ENCODE measurements at regions of chr5 and their contacts with region 1.

Region 1: DNA sequence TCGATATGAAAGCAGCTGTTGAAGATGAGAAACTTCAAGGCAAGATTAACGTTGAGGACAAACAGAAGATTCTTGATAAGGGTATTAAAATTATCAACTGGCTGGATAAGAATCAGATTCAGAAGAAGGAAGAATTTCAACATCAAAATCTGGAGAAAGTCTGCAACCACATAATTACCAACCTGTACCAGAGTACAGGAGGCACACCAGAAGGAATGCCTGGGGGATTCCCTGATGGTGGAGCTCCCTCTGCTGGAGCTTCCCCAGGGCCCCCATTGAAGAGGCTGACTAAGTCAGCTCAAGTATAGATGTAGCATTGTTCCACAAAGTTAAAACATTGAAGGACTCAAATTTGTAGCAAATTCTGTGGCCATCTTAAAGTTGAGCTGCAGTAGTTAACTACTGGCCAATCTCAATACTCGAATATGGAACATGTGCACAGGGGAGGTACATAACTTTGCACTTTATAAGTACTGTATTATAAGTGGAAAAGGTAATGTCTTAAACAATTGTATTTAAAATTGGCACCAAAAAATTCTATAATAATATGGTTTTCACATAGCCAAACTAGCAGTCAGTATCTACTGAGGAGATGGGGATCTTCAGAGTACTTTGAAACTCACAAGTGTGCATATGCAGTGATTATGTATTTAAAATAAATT is 237.5 kb downstream of the CHSY3 start:
- DNase-seq: peak; percentile 17 to 70
- H3K4me3 ChIP-seq: no peak overlapping the region
- H3K27ac ChIP-seq: no peak overlapping the region
- H3K4me1 ChIP-seq: no peaks in the 10 kb centered on the region
- H3K27me3 ChIP-seq: no peaks in the 10 kb centered on the region
- CTCF ChIP-seq: peak; percentile 70 to 83 (median 81)
- EP300 ChIP-seq: no peak
- POLR2A ChIP-seq: no peak
- RAD21 ChIP-seq: peak; percentile 89 to 90

Region 2: DNA sequence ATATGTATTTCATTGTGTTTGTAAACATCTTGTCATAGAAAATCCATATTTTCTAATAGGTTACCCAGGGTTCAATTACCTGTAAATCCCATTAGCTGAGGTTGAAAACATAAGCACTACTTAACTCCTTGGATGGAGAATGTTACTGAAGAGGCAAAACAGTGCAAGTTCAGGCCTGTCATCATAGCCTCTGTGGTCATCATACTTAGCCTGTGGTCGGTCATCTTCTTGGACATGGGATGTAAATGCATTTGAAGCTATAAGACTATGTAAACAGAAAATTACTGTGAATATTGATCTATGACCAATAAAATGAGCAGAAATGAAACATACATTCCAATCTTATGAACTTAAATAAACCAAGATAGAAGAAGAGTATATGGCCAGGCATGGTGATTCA is 72.8 kb before region 1 on chr5:
- CTCF ChIA-PET with region 1: no interaction called
- POLR2A ChIA-PET with region 1: no interaction called
- DNase-seq: no peak
- H3K4me3 ChIP-seq: no peak overlapping the region
- H3K27ac ChIP-seq: no peak overlapping the region
- H3K4me1 ChIP-seq: no peaks in the 10 kb centered on the region
- H3K27me3 ChIP-seq: no peaks in the 10 kb centered on the region
- CTCF ChIP-seq: no peak
- EP300 ChIP-seq: no peak
- POLR2A ChIP-seq: no peak
- RAD21 ChIP-seq: no peak

Region 3: DNA sequence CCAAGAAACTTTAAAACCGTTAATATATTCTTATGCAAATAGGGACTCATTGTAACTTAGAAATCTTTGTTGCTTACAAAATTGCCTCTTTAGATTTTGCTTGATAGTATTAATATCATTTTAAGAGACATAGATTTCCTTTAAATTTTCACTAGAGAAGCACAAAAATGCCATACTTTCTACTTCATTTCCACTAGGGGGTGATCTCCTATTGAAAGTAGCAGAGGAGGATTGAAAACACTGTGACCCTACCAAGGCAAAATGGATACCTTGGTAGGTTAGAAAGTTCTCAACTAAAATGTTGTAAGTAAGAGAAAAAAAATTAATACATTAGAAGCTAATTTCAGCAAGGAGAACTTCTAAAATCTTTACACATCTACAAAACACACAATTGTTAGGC is 32.6 kb before region 1 on chr5:
- CTCF ChIA-PET with region 1: interaction called, 22 read pairs
- POLR2A ChIA-PET with region 1: no interaction called
- DNase-seq: no peak
- H3K4me3 ChIP-seq: no peak overlapping the region
- H3K27ac ChIP-seq: no peak overlapping the region
- H3K4me1 ChIP-seq: no peaks in the 10 kb centered on the region
- H3K27me3 ChIP-seq: no peaks in the 10 kb centered on the region
- CTCF ChIP-seq: peak in 2 of 3 experiments; percentile 42 to 49; a peak in 2 of 4 replicates
- EP300 ChIP-seq: no peak
- POLR2A ChIP-seq: no peak
- RAD21 ChIP-seq: peak; percentile 74 to 81

Region 4: GRCh38 chr5:130116462-130116861 is 25.3 kb before region 1 on chr5:
- CTCF ChIA-PET with region 1: interaction called, 12 read pairs
- POLR2A ChIA-PET with region 1: no interaction called
- DNase-seq: no peak
- H3K4me3 ChIP-seq: no peak overlapping the region
- H3K27ac ChIP-seq: no peak overlapping the region
- H3K4me1 ChIP-seq: no peaks in the 10 kb centered on the region
- H3K27me3 ChIP-seq: peaks cover 0 to 1% (median 0%) of the 10 kb centered on the region in 4 experiments; a peak in 1 of 7 replicates
- CTCF ChIP-seq: no peak
- EP300 ChIP-seq: no peak
- POLR2A ChIP-seq: no peak
- RAD21 ChIP-seq: no peak

Region 5: DNA sequence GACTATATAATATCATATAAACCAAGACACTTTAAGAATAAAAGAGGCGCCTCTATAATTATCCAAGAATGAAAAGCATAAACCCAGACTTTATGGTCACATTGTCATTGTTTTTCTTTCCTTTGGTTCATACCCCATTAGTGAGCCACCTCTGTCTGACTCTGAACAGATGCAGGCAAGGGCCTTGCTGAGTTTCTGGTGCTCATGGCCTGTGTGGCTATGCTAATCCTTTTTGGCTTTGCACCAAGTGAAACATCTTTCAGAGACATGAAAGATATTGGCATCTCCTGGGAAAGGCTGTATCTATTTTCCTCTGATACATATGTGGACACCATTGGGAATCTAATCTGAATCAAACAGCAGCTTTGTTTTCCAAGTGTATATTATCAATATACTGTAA is 15.0 kb before region 1 on chr5:
- CTCF ChIA-PET with region 1: interaction called, 31 read pairs
- POLR2A ChIA-PET with region 1: no interaction called
- DNase-seq: no peak
- H3K4me3 ChIP-seq: no peak overlapping the region
- H3K27ac ChIP-seq: no peak overlapping the region
- H3K4me1 ChIP-seq: no peaks in the 10 kb centered on the region
- H3K27me3 ChIP-seq: no peaks in the 10 kb centered on the region
- CTCF ChIP-seq: no peak
- EP300 ChIP-seq: no peak
- POLR2A ChIP-seq: no peak
- RAD21 ChIP-seq: no peak